ENCODE measurements at regions of chr20 and their contacts with region 1.

Region 1: DNA sequence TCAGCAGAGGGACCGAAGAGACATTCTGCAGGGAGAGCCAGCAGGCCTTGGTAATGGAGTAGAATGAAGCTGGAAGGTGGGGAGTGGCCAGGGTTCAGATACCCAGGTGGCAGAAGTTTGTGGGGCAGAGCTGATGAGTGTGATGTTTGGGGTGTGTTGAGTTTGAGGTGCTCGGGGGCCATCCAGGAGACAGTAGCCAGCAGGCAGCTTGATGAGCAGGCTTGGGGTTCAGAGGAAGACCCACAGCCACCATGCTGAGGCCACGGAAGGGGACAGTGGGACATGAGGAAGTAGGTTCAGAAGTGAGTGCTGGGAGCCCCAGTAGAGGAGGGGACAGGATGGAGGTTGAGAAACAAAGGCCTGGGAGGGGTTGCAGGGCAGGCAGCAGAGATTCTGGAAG is 11.1 kb upstream of the FOXS1 start:
- DNase-seq: no peak
- H3K4me3 Mint-ChIP-seq: no peak overlapping the region
- H3K27ac Mint-ChIP-seq: no peak overlapping the region
- H3K4me1 Mint-ChIP-seq: peaks cover 5% of the 10 kb centered on the region
- H3K27me3 Mint-ChIP-seq: peaks cover 23% of the 10 kb centered on the region
- CTCF ChIP-seq: no peak

Region 2: GRCh38 chr20:31652917-31653396 is 203.6 kb before region 1 on chr20:
- CTCF ChIA-PET with region 1: no interaction called
- POLR2A ChIA-PET with region 1: no interaction called
- intact Hi-C with region 1: no loop called
- DNase-seq: peak; percentile 83
- H3K4me3 Mint-ChIP-seq: peak overlapping the region; percentile 2
- H3K27ac Mint-ChIP-seq: peak overlapping the region; percentile 57
- H3K4me1 Mint-ChIP-seq: peaks cover 12% of the 10 kb centered on the region
- H3K27me3 Mint-ChIP-seq: no peaks in the 10 kb centered on the region
- CTCF ChIP-seq: no peak

Region 3: DNA sequence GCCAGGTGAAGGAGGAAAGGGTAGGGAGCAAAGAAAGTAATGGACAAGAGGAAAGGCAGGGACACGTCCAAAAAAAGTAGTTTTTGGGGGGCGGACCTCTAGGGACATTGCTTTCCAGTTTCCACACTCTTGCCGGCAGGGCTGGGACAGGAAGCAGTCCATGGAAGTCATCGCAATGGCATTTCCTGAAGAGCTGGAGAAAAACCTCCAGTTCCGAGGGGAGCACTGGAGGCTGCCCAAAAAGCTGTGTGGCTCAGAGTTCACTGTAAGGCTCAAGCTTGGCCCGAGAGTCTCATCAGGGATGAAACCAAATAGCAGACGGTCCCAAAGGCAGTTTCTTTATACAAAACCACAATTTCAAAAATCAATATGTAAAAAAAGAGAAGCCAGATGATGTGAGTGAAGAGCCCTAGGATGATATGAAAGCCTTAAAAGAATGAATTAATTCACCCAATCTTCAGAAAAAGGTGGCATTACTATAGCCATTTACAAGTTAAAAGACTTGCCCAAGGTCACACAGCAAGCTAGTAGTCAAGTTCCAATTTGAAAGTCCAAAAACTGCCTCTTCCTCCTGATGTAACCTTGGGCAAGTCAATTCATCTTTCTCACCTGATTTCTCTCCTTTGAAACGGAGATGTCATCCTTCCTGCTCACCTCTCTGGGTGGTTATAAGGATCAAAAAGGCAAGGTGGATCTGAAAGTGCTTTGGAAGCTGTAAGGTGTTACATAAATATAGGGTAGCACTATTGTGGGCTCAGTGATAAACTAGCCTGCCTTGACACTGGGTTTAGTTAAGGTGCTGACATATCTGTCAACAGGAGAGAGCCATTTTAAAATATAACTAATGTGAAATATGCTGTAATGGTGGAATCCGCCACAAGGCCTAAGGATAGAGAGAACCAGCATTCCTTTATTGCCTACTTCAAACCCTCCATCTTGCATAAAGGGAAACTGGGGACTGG is 142.9 kb before region 1 on chr20:
- CTCF ChIA-PET with region 1: no interaction called
- POLR2A ChIA-PET with region 1: no interaction called
- intact Hi-C with region 1: no loop called
- DNase-seq: peak; percentile 91
- H3K4me3 Mint-ChIP-seq: peak overlapping the region; percentile 70
- H3K27ac Mint-ChIP-seq: peak overlapping the region; percentile 96
- H3K4me1 Mint-ChIP-seq: peaks cover 78% of the 10 kb centered on the region
- H3K27me3 Mint-ChIP-seq: no peaks in the 10 kb centered on the region
- CTCF ChIP-seq: no peak

Region 4: DNA sequence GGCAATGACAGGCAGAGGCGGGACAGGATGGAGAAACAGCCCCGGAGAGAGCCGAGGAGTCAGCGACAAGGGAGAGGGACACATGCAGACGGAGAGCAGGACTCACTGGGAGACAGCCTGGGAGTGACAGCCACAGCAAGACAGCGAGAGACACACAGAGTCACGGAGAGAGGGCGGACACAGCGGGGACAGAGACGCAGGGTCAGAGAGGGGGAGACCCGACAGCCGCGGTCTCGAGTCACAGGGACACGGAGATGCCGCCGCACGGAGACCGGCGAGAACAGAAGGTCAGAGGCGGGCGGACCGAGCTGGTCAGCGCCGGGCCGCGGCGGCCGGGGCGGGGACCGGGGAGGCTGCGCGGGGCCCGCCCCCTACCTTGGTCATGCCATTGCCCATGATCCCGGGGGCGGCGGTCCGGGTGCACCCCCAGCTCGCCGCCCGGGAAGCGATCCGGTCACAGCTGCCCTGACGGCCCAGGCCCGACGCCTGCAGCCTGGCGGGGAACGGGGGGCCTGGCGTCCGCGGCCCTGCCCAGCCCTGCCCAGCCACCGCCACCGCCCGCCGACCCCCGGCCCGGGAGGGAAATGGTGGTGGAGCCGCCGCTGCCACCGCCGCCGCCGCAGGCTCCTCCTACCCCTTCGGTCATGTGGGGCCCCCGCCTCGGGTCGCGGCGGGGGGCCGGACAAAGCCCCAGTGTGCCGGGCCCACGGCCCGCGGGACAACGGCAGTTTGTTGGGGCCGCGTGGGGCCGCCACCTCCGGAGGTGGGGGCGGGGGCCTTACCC is 13.6 kb after region 1 on chr20 and contains the starts of genes DUSP15 and TTLL9:
- CTCF ChIA-PET with region 1: interaction called, 49 read pairs
- POLR2A ChIA-PET with region 1: interaction called, 3 read pairs
- intact Hi-C with region 1: no loop called
- DNase-seq: no peak
- H3K4me3 Mint-ChIP-seq: peak within 1 kb of the TSS; percentile 77
- H3K27ac Mint-ChIP-seq: peak within 1 kb of the TSS; percentile 81
- H3K4me1 Mint-ChIP-seq: peaks cover 7% of the 10 kb centered on the region
- H3K27me3 Mint-ChIP-seq: peaks cover 67% of the 10 kb centered on the region
- CTCF ChIP-seq: no peak
- total RNA-seq, gene DUSP15: not detected in 2 replicates
- total RNA-seq, gene TTLL9: 0.19 TPM in 1 of 2 replicates, not detected in the other

Region 5: GRCh38 chr20:31879143-31879987 is 22.8 kb after region 1 on chr20:
- CTCF ChIA-PET with region 1: interaction called, 63 read pairs
- POLR2A ChIA-PET with region 1: interaction called, 3 read pairs
- intact Hi-C with region 1: no loop called
- DNase-seq: peak; percentile 92
- H3K4me3 Mint-ChIP-seq: peak overlapping the region; percentile 98
- H3K27ac Mint-ChIP-seq: peak overlapping the region; percentile 98
- H3K4me1 Mint-ChIP-seq: no peaks in the 10 kb centered on the region
- H3K27me3 Mint-ChIP-seq: peaks cover 12% of the 10 kb centered on the region
- CTCF ChIP-seq: no peak

Measured in MCF 10A (cell line).